Endothelial cell of umbilical vein (primary cell): ENCODE measurements at regions of chr3 and their contacts with region 1.

Region 1: GRCh38 chr3:157618075-157618760 is 115.0 kb upstream of the VEPH1 start:
- DNase-seq: peak; percentile 66
- H3K4me3 ChIP-seq: no peak overlapping the region
- H3K27ac ChIP-seq: no peak overlapping the region
- H3K4me1 ChIP-seq: peaks cover 3% of the 10 kb centered on the region
- H3K27me3 ChIP-seq: peaks cover 2 to 44% of the 10 kb centered on the region in 2 experiments
- CTCF ChIP-seq: peak; percentile 38 to 45
- POLR2A ChIP-seq: no peak

Region 2: GRCh38 chr3:157333551-157333991 is 284.6 kb before region 1 on chr3:
- CTCF ChIA-PET with region 1: no interaction called
- POLR2A ChIA-PET with region 1: no interaction called
- dilution Hi-C with region 1: no loop called
- intact Hi-C with region 1: no loop called
- DNase-seq: no peak
- H3K4me3 ChIP-seq: no peak overlapping the region
- H3K27ac ChIP-seq: no peak overlapping the region
- H3K4me1 ChIP-seq: peaks cover 43% of the 10 kb centered on the region
- H3K27me3 ChIP-seq: no peaks in the 10 kb centered on the region
- CTCF ChIP-seq: no peak
- POLR2A ChIP-seq: no peak

Region 3: DNA sequence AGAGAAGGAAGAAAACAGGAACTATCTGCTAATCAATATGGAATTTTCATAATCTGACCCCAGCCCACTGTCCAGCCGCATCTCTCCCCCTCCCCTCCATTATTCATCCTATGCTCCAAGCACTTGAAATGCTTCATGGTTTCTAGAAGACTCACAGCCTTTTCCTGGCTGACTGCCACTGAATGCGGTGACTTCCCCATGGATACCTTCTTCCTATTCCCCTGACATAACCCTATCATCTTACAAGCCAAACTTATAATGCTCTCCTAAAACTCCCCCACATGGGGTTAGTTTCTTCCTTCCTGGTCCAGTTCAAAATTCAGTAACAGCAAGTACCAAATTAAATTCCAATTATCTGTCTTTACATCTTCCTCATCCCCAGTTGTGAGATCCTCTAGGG is 212.8 kb before region 1 on chr3:
- CTCF ChIA-PET with region 1: no interaction called
- POLR2A ChIA-PET with region 1: no interaction called
- dilution Hi-C with region 1: no loop called
- intact Hi-C with region 1: no loop called
- DNase-seq: no peak
- H3K4me3 ChIP-seq: no peak overlapping the region
- H3K27ac ChIP-seq: no peak overlapping the region
- H3K4me1 ChIP-seq: peaks cover 24% of the 10 kb centered on the region
- H3K27me3 ChIP-seq: no peaks in the 10 kb centered on the region
- CTCF ChIP-seq: no peak
- POLR2A ChIP-seq: no peak

Region 4: GRCh38 chr3:158091531-158091930 is 473.3 kb after region 1 on chr3:
- CTCF ChIA-PET with region 1: no interaction called
- POLR2A ChIA-PET with region 1: no interaction called
- dilution Hi-C with region 1: no loop called
- intact Hi-C with region 1: loop called (anchors 5 kb)
- DNase-seq: peak; percentile 34
- H3K4me3 ChIP-seq: no peak overlapping the region
- H3K27ac ChIP-seq: no peak overlapping the region
- H3K4me1 ChIP-seq: no peaks in the 10 kb centered on the region
- H3K27me3 ChIP-seq: peaks cover 43 to 86% of the 10 kb centered on the region in 2 experiments
- CTCF ChIP-seq: peak; percentile 27 to 29
- POLR2A ChIP-seq: no peak

Region 5: GRCh38 chr3:158532099-158532734 is 914.0 kb after region 1 on chr3:
- CTCF ChIA-PET with region 1: interaction called, 21 read pairs
- POLR2A ChIA-PET with region 1: no interaction called
- dilution Hi-C with region 1: no loop called
- intact Hi-C with region 1: loop called (anchors 1 kb)
- DNase-seq: peak; percentile 72
- H3K4me3 ChIP-seq: no peak overlapping the region
- H3K27ac ChIP-seq: no peak overlapping the region
- H3K4me1 ChIP-seq: no peaks in the 10 kb centered on the region
- H3K27me3 ChIP-seq: no peaks in the 10 kb centered on the region
- CTCF ChIP-seq: peak; percentile 36 to 46
- POLR2A ChIP-seq: no peak